ENCODE measurements at regions of chr6 and their contacts with region 1.

Region 1: GRCh38 chr6:83057705-83058321 is 7.8 kb downstream of the UBE3D start:
- DNase-seq: peak; percentile 38 to 66 (median 59)
- H3K4me3 ChIP-seq: no peak overlapping the region
- H3K27ac ChIP-seq: no peak overlapping the region
- H3K4me1 ChIP-seq: peaks cover 0 to 2% (median 0%) of the 10 kb centered on the region in 4 experiments
- H3K27me3 ChIP-seq: no peaks in the 10 kb centered on the region

Region 2: GRCh38 chr6:82270881-82271645 is 786.8 kb before region 1 on chr6:
- CTCF ChIA-PET with region 1: interaction called, 45 read pairs
- POLR2A ChIA-PET with region 1: no interaction called
- DNase-seq: peak; percentile 24 to 55 (median 54)
- H3K4me3 ChIP-seq: no peak overlapping the region
- H3K27ac ChIP-seq: no peak overlapping the region
- H3K4me1 ChIP-seq: no peaks in the 10 kb centered on the region
- H3K27me3 ChIP-seq: peaks cover 0 to 4% (median 0%) of the 10 kb centered on the region in 5 experiments